ENCODE measurements at regions of chr2 and their contacts with region 1.

Region 1: GRCh38 chr2:164560181-164560792 is 61.0 kb downstream of the GRB14 start:
- DNase-seq: peak; percentile 18
- H3K27ac ChIP-seq: no peak overlapping the region
- CTCF ChIP-seq: peak; percentile 82

Region 2: GRCh38 chr2:164599966-164600589 is 39.8 kb after region 1 on chr2:
- CTCF ChIA-PET with region 1: interaction called, 14 read pairs
- POLR2A ChIA-PET with region 1: no interaction called
- DNase-seq: peak; percentile 55
- H3K27ac ChIP-seq: no peak overlapping the region
- CTCF ChIP-seq: peak; percentile 68

Region 3: GRCh38 chr2:165499131-165499530 is 938.8 kb after region 1 on chr2:
- CTCF ChIA-PET with region 1: no interaction called
- POLR2A ChIA-PET with region 1: no interaction called
- DNase-seq: no peak
- H3K27ac ChIP-seq: no peak overlapping the region
- CTCF ChIP-seq: no peak

Measured in RWPE1 (cell line).